PC-9 (cell line): ENCODE measurements at regions of chr2 and their contacts with region 1.

Region 1: DNA sequence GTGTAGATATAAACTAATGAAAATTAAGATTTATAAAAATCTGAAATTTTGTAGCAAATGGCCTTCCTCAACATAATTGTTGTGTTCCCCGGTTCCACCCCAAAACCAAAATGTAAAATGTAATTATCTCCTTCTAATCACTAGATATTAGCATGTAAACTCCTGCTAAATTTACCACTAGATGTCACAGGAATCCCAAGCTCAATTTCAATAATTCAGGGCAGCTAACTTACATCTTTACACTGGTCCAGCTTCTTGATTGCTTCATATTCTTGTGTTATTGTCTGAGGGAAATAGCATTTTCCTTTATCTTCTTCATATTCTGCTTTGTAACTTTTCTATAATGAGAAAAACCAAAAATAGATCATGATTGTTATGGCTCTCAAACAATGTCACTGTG is 42.6 kb downstream of the NEB start:
- DNase-seq: no peak
- H3K4me3 ChIP-seq: no peak overlapping the region
- H3K27ac ChIP-seq: no peak overlapping the region
- H3K4me1 ChIP-seq: no peaks in the 10 kb centered on the region
- H3K27me3 ChIP-seq: no peaks in the 10 kb centered on the region
- CTCF ChIP-seq: no peak

Region 2: DNA sequence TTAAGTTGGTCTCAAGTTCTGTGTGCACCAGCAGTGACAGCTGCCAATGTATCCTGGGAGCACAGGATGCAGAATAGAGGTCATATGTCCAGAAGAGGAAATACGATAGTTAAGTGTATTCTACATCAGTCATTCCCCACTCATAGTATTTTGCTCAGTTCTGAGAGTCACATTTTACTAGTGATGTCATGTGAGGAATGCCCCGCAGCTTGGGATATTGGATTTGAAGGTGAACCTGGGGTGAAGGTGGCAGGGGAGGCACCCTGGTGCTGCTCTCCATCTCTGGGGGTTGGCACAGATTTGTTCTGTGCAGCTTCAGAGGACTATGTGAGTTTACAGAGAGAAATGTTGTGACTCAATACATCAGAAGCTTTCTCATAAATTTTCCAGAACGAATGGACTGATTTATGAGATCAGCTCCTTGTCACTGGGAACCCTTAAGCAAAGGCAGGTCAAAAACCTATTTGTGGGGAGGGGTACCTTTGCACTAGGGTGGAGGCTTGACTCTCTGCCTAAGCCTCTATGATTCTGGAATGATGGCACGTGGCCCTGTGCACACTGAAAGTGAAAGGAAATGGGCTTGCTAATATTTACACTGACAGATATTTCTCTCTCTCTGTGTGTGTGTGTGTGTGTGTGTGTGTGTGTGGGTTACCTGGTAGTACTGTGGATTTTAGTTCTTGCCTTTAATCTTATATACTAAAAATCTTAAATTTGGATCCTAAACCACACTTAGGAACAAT is 53.3 kb before region 1 on chr2:
- CTCF ChIA-PET with region 1: no interaction called
- POLR2A ChIA-PET with region 1: interaction called, 11 read pairs
- intact Hi-C with region 1: no loop called
- DNase-seq: no peak
- H3K4me3 ChIP-seq: no peak overlapping the region
- H3K27ac ChIP-seq: no peak overlapping the region
- H3K4me1 ChIP-seq: no peaks in the 10 kb centered on the region
- H3K27me3 ChIP-seq: no peaks in the 10 kb centered on the region
- CTCF ChIP-seq: no peak